Activated CD8-positive, alpha-beta T cell treated with anti-CD3 and anti-CD28 coated beads for 36 hours (primary cell): ENCODE measurements at regions of chr5 and their contacts with region 1.

Region 1: GRCh38 chr5:87340716-87341115 is 72.0 kb downstream of the CCNH start:
- DNase-seq: no peak
- ATAC-seq: peak; percentile 94
- H3K4me3 Mint-ChIP-seq: peak overlapping the region; percentile 51
- H3K27ac Mint-ChIP-seq: peak overlapping the region; percentile 89
- H3K4me1 Mint-ChIP-seq: peaks cover 18% of the 10 kb centered on the region
- H3K27me3 Mint-ChIP-seq: no peaks in the 10 kb centered on the region
- CTCF ChIP-seq: no peak

Region 2: GRCh38 chr5:87243166-87243844 is 97.4 kb before region 1 on chr5:
- CTCF ChIA-PET with region 1: no interaction called
- POLR2A ChIA-PET with region 1: no interaction called
- intact Hi-C with region 1: no loop called
- DNase-seq: no peak
- ATAC-seq: no peak
- H3K4me3 Mint-ChIP-seq: no peak overlapping the region
- H3K27ac Mint-ChIP-seq: no peak overlapping the region
- H3K4me1 Mint-ChIP-seq: no peaks in the 10 kb centered on the region
- H3K27me3 Mint-ChIP-seq: no peaks in the 10 kb centered on the region
- CTCF ChIP-seq: no peak

Region 3: GRCh38 chr5:87298692-87299362 is 41.9 kb before region 1 on chr5:
- CTCF ChIA-PET with region 1: no interaction called
- POLR2A ChIA-PET with region 1: no interaction called
- intact Hi-C with region 1: loop called (anchors 5 kb)
- DNase-seq: no peak
- ATAC-seq: no peak
- H3K4me3 Mint-ChIP-seq: no peak overlapping the region
- H3K27ac Mint-ChIP-seq: no peak overlapping the region
- H3K4me1 Mint-ChIP-seq: peaks cover 78% of the 10 kb centered on the region
- H3K27me3 Mint-ChIP-seq: no peaks in the 10 kb centered on the region
- CTCF ChIP-seq: no peak